ENCODE measurements at regions of chrX and their contacts with region 1.

Region 1: GRCh38 chrX:10106806-10107205 is 50.0 kb upstream of the CLCN4 start:
- DNase-seq: peak; percentile 75

Region 2: DNA sequence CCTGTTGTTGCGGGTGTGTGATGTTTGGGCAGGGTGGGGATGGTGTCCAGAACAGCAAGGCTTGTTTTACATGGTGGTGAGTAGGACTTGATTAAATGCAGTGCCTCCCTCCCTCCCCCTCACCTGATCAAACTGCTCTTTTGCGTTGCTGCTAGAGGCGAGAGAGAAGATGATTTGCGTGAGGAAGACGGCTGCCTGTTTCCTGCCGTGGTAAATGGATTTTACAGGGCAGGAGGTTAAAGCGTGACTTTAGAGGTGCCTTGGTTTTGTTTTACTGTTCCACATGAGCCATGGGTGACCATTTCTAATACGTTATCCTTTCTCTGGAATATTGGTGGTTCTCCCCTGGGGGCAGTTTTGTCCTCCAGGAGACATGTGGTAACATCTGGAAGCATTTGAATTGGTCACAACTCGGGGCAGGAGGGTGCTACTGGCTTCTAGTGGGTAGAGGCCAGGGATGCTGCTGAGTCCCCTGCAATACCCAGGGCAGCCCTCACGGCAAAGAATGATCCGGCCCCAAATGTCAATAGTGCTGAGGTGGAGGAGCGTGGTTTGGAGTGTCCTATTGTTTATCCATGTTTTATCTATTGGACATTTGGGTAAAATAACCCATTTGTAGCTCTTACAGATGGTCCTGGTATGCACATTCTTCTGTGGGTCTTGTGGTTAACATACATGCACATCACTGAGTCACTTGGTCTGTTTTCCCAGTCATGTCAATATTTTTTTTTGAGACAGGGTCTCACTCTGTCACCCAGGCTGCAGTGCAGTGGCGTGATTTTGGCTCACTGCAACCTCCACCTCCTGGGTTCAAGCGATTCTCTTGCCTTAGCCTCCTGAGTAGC is 246.9 kb before region 1 on chrX:
- in situ Hi-C with region 1: no loop called
- DNase-seq: no peak

Region 3: GRCh38 chrX:10007621-10008020 is 99.2 kb before region 1 on chrX:
- in situ Hi-C with region 1: loop called (anchors 5 kb)
- DNase-seq: peak; percentile 69

Region 4: GRCh38 chrX:10017866-10018265 is 88.9 kb before region 1 on chrX:
- in situ Hi-C with region 1: no loop called
- DNase-seq: peak; percentile 93

Measured in KBM-7 (cell line).